Activated CD8-positive, alpha-beta memory T cell treated with anti-CD3 and anti-CD28 coated beads, Interleukin-2, amount 10 ng/mL, durations not matched to agents 7 days and 5 days (primary cell): ENCODE measurements at regions of chr15 and their contacts with region 1.

Region 1: GRCh38 chr15:68304589-68305337 is 27.2 kb downstream of the FEM1B start:
- DNase-seq: peak; percentile 33
- ATAC-seq: no peak
- H3K4me3 Mint-ChIP-seq: no peak overlapping the region
- H3K27ac Mint-ChIP-seq: no peak overlapping the region
- H3K4me1 Mint-ChIP-seq: peaks cover 9% of the 10 kb centered on the region
- H3K27me3 Mint-ChIP-seq: peaks cover 6% of the 10 kb centered on the region

Region 2: DNA sequence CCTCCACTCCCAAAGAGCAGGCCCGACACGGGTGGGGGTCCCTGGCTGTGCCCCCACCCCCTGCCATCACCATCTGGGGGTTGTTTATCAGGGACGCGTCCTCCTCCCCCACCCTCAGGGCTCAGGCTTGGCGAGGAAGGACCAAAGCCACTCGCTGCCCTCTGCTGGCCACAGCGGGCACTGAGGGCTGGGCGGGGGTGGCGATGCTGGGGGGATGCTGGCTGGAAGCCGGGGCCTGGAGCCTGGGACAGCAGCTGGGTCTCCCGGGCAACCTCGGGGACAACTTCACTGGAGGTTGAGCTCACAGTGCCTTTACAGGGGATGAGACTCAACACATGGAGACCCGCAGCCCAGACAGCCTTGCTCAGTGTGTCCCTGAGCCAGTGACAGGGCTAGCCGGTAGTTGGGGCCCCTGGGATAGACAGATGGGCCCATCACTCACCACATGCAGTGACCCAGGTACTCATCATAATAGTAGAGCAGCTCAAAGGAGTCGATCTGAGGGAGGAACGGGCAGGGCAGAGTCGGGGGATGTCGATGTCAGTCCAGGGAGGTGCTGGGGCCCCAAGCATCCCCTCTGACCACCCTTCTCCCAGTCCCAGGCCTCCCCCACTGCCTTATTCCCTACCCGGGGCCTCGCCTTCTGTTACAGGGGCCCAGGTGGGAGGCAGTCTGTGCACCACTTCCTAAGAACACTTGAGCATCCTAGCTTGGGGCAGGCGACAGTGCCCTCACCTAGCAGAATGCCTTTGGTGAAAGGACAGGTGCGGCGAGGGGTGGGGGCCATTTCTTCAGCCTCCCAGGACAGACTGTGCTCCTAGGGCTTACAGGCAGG is 93.7 kb before region 1 on chr15:
- CTCF ChIA-PET with region 1: no interaction called
- DNase-seq: peak; percentile 60
- ATAC-seq: peak; percentile 50
- H3K4me3 Mint-ChIP-seq: no peak overlapping the region
- H3K27ac Mint-ChIP-seq: no peak overlapping the region
- H3K4me1 Mint-ChIP-seq: peaks cover 23% of the 10 kb centered on the region
- H3K27me3 Mint-ChIP-seq: no peaks in the 10 kb centered on the region

Region 3: DNA sequence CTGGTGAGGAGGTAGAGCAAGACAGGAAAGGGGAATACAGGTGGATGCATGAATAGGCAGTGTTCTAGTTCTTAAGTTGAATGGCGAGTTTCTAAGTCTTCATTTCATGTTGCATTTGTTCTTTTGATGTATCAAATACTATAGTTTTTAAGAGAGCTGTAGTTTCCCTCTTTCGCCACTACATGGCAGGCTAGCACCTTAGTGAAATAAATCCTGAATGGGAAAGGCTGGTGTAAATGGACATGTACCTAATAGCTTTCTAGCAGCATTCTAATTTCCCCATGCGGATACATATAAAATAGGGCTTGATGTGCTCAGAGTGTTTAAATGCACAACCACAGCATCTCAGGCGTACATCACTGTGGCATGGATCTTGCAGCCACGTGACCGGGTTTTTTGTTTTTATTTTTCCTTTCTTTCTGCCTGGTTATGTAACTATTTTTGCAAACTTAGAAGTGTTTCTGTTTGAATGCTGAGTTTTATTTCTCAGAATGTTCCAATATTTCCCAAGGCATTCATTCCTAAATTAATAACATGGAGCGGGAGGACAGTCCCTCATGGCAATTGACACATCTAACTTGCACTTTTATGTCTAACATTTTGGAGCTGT is 51.7 kb before region 1 on chr15:
- CTCF ChIA-PET with region 1: interaction called, 90 read pairs
- DNase-seq: no peak
- ATAC-seq: peak; percentile 78
- H3K4me3 Mint-ChIP-seq: no peak overlapping the region
- H3K27ac Mint-ChIP-seq: no peak overlapping the region
- H3K4me1 Mint-ChIP-seq: peaks cover 2% of the 10 kb centered on the region
- H3K27me3 Mint-ChIP-seq: peaks cover 40% of the 10 kb centered on the region

Region 4: DNA sequence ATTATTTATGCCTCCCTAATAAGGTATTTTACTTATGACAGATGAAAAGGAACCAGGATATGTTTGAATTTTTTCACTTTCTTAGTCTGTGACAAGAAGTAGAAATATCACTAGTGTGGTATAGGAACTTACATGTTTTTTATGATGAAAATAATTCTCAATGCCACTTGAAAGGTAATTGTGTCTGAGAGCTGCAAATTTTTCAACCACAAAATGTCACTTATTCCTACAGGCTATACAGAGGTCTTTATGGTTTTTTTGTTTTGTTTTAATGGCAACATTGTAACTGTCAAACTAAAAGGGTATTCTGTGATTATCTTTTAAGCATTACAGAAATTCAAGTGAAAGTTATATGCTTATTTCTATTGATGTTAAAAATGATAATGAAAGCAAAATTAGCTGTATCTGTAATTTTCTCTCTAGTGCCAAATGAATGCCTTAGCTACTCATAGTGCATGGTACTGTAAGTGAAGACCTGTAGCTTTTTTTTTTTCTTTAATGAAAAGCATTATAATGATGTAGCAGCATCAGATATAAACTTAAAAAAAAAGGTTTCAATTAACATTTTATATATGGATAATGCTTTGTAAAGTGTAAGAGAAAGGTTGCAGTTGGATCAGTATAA is 12.5 kb before region 1 on chr15:
- CTCF ChIA-PET with region 1: interaction called, 33 read pairs
- DNase-seq: no peak
- ATAC-seq: peak; percentile 27
- H3K4me3 Mint-ChIP-seq: no peak overlapping the region
- H3K27ac Mint-ChIP-seq: no peak overlapping the region
- H3K4me1 Mint-ChIP-seq: peaks cover 30% of the 10 kb centered on the region
- H3K27me3 Mint-ChIP-seq: no peaks in the 10 kb centered on the region

Region 5: GRCh38 chr15:68383161-68384074 is 78.7 kb after region 1 on chr15:
- CTCF ChIA-PET with region 1: interaction called, 48 read pairs
- DNase-seq: peak; percentile 61
- ATAC-seq: peak; percentile 75
- H3K4me3 Mint-ChIP-seq: no peak overlapping the region
- H3K27ac Mint-ChIP-seq: no peak overlapping the region
- H3K4me1 Mint-ChIP-seq: peaks cover 13% of the 10 kb centered on the region
- H3K27me3 Mint-ChIP-seq: peaks cover 6% of the 10 kb centered on the region

Region 6: GRCh38 chr15:68536331-68537095 is 231.8 kb after region 1 on chr15:
- CTCF ChIA-PET with region 1: interaction called, 21 read pairs
- DNase-seq: no peak
- ATAC-seq: no peak
- H3K4me3 Mint-ChIP-seq: no peak overlapping the region
- H3K27ac Mint-ChIP-seq: no peak overlapping the region
- H3K4me1 Mint-ChIP-seq: peaks cover 2% of the 10 kb centered on the region
- H3K27me3 Mint-ChIP-seq: peaks cover 53% of the 10 kb centered on the region

Region 7: DNA sequence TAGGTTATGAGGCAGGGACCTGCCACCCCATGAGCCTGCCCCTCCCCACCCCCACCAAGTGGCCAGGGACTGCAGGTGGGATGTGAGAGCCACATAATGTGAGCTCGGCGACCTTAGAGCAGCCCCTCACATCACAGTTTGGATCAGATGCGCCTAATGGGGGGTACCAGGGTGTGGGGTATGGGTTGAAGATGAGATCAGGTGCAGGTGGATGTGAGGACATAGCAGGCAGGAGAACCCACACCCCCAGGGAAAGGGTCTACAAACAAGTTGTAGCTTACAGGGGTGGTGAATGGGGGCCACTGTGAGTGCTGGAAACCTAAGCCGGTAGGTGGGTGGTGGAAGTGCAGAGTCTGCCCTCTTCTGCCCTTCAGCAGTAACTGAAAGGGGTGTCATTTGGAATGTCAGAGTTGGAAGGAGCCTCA is 368.0 kb after region 1 on chr15:
- CTCF ChIA-PET with region 1: interaction called, 20 read pairs
- DNase-seq: no peak
- ATAC-seq: no peak
- H3K4me3 Mint-ChIP-seq: no peak overlapping the region
- H3K27ac Mint-ChIP-seq: no peak overlapping the region
- H3K4me1 Mint-ChIP-seq: peaks cover 2% of the 10 kb centered on the region
- H3K27me3 Mint-ChIP-seq: peaks cover 21% of the 10 kb centered on the region